ENCODE measurements at regions of chr14 and their contacts with region 1.

Region 1: DNA sequence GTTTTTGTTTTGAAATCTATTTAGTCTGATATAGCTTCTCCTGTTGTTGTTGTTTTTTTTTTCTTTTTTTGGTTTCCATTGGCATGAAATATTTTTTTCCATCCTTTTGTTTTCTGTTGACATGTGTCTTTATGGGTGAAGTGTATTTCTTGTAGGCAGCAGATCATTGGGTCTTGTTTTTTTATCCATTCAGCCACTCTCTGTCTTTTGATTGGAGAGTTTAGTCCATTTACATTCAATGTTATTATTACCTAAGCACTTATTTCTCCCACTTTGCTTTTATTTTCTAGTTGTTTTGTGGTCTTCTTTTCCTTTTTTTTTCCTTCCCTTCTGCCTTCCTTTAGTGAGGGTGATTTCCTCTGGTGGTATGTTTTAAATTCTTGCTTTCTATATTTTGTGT is 193.6 kb upstream of the TMEM260 start:
- DNase-seq: no peak
- H3K4me3 ChIP-seq: no peak overlapping the region
- H3K27ac ChIP-seq: no peak overlapping the region
- H3K4me1 ChIP-seq: no peaks in the 10 kb centered on the region
- CTCF ChIP-seq: no peak

Region 2: GRCh38 chr14:56374421-56374820 is 11.6 kb before region 1 on chr14:
- CTCF ChIA-PET with region 1: no interaction called
- POLR2A ChIA-PET with region 1: no interaction called
- intact Hi-C with region 1: no loop called
- DNase-seq: no peak
- H3K4me3 ChIP-seq: no peak overlapping the region
- H3K27ac ChIP-seq: no peak overlapping the region
- H3K4me1 ChIP-seq: no peaks in the 10 kb centered on the region
- CTCF ChIP-seq: no peak

Region 3: DNA sequence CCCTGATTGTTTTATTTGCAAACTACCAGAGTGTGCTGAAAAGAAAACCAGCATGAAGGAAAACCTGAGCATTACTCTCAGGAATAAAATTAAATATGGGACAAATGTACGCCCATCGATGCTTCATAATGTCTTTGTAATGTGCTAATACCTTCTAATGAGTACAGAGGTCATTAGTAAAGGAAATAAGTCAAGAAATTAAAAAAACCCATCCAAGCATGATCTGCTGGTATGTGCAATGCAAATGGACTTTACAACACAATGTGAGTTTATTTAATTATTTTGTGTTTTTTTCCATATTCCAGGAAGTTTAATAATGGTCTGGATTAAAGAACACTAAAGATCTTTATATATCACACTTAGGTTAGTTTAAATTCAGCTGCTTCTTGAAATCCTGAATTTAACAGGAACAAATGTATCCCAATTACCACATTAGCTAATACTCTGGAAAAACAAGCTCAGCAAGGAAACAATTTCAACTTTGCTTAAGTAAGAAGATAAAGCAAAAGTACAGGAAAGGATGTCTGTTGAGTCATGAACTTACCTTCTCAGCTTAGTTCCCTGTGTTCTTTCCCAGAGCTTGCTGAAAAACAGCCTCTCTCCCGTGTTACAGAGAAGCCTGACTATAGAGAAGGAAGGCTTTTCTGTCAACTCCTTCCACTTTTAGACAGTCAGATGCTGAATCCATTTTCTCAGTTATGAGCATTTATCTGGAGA is 14.2 kb after region 1 on chr14:
- CTCF ChIA-PET with region 1: interaction called, 11 read pairs
- POLR2A ChIA-PET with region 1: no interaction called
- intact Hi-C with region 1: no loop called
- DNase-seq: no peak
- H3K4me3 ChIP-seq: no peak overlapping the region
- H3K27ac ChIP-seq: no peak overlapping the region
- H3K4me1 ChIP-seq: no peaks in the 10 kb centered on the region
- CTCF ChIP-seq: no peak

Measured in OCI-LY7 (cell line).